ENCODE measurements at regions of chr6 and their contacts with region 1.

Region 1: GRCh38 chr6:129730477-129731165 is 20.6 kb upstream of the ARHGAP18 start:
- DNase-seq: peak; percentile 53 to 66 (median 61)
- H3K4me3 ChIP-seq: no peak overlapping the region
- H3K27ac ChIP-seq: no peak overlapping the region
- H3K4me1 ChIP-seq: no peaks in the 10 kb centered on the region
- H3K27me3 ChIP-seq: no peaks in the 10 kb centered on the region

Region 2: DNA sequence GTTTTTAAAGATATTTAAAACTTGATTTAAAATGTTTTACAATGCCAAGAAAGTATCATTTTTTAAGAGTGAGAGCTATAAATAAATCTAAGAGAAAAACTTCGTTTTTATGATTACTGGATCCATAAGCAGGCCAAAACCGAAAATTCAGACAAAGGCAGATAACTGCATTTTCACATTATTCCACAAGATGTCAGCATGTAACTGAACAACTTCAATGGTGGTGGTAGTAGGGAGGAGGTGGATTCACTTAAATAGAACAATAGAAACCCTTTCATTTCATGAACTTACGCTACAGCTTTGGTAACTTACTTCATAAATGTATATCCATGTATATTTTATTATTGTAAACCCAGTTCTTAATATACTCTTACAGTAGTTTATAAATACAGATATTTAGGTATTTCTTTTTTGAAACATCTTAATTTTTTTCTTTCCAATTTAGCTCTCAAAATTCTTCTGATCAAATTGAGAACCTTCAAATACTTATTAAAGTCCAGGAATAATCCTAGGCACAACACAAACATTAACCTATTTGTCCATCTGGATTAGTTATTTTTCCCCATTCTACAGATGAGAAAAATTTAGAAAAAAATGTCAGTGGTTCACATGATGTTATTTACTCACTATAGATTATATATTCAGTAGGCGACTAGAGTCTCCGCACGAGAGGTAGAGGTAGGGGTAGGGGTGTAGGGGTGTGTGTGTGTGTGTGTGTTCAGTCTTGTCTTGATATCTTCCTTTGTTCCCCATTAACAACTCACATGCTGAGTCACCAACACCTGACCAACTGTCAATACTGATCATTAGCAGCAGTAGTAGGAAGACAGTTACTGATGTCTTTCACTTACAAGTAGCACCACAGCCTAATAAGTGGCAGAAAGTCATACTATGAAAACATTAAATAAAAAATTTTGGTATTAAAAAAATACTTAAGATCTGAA is 132.1 kb before region 1 on chr6:
- CTCF ChIA-PET with region 1: interaction called, 158 read pairs
- POLR2A ChIA-PET with region 1: no interaction called
- DNase-seq: peak; percentile 77 to 86 (median 82)
- H3K4me3 ChIP-seq: no peak overlapping the region
- H3K27ac ChIP-seq: no peak overlapping the region
- H3K4me1 ChIP-seq: no peaks in the 10 kb centered on the region
- H3K27me3 ChIP-seq: no peaks in the 10 kb centered on the region

Region 3: GRCh38 chr6:129672881-129673643 is 57.6 kb before region 1 on chr6:
- CTCF ChIA-PET with region 1: interaction called, 29 read pairs
- POLR2A ChIA-PET with region 1: no interaction called
- DNase-seq: peak in 2 of 3 donors; percentile 72 to 81
- H3K4me3 ChIP-seq: no peak overlapping the region
- H3K27ac ChIP-seq: no peak overlapping the region
- H3K4me1 ChIP-seq: peaks cover 0 to 23% (median 3%) of the 10 kb centered on the region in 4 experiments
- H3K27me3 ChIP-seq: no peaks in the 10 kb centered on the region

Region 4: DNA sequence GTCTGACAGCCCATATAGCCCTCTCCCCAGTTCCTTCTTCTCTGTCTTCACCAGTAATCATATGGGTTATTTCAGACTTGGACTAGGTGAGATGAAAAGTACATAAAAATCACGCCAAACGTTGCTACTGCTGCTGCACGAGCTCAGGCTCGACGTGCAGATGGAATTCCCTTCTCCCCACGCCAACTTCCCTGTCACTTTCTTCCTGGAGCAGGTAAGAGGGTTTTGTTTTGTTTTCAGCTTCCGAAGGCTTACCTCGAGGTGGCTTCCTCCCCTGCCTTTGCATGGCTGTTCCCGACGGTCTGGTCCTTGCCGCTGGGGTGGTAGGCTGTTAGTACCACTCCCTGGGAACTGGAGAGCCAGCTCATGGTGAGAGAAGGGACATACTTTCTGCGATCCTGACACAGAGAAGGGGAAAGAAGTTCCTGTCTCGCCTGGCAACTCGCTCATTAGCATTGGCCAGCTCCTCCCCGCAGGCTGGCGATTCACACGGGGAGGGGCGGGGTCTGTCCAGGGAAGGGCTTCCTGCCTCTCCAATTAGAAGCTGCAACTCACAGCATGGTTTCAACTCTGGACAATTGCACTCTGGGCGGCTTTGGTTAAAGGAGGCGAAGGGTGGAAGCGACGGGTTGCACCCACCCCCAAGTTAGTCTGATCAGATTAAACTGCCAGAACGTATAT is 20.7 kb before region 1 on chr6 and contains the start of gene ARHGAP18:
- CTCF ChIA-PET with region 1: interaction called, 20 read pairs
- POLR2A ChIA-PET with region 1: no interaction called
- DNase-seq: peak; percentile 64 to 82 (median 72)
- H3K4me3 ChIP-seq: peak within 1 kb of the TSS; percentile 58 to 87 (median 81)
- H3K27ac ChIP-seq: peak within 1 kb of the TSS; percentile 35 to 69
- H3K4me1 ChIP-seq: peaks cover 2 to 27% (median 8%) of the 10 kb centered on the region in 4 experiments
- H3K27me3 ChIP-seq: no peaks in the 10 kb centered on the region

Region 5: GRCh38 chr6:129717277-129717676 is 13.3 kb before region 1 on chr6:
- CTCF ChIA-PET with region 1: interaction called, 13 read pairs
- POLR2A ChIA-PET with region 1: no interaction called
- DNase-seq: no peak
- H3K4me3 ChIP-seq: no peak overlapping the region
- H3K27ac ChIP-seq: no peak overlapping the region
- H3K4me1 ChIP-seq: no peaks in the 10 kb centered on the region
- H3K27me3 ChIP-seq: no peaks in the 10 kb centered on the region

Region 6: GRCh38 chr6:129744201-129744879 is 13.7 kb after region 1 on chr6:
- CTCF ChIA-PET with region 1: interaction called, 27 read pairs
- POLR2A ChIA-PET with region 1: no interaction called
- DNase-seq: no peak
- H3K4me3 ChIP-seq: no peak overlapping the region
- H3K27ac ChIP-seq: no peak overlapping the region
- H3K4me1 ChIP-seq: peaks cover 12 to 16% (median 13%) of the 10 kb centered on the region in 4 experiments
- H3K27me3 ChIP-seq: peaks cover 0 to 55% (median 7%) of the 10 kb centered on the region in 5 experiments

Region 7: DNA sequence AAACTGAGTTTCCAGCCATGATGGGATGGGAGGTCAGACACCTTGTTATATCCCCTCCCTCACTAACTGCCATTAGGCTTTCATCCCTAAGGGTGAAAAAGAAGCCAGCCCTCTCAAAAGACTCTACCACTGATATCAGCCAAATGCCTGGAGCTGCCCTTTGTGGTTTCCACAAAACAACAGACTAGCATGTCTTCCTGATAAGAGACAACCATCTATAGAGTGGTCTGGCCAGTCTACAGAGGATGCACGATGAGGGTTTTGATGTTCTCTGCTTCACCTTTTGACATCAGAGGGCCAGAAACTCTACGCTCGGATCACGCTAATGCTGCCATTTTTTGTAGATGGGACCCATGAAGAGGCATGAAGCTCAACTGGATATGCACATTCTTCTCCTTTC is 41.1 kb after region 1 on chr6:
- CTCF ChIA-PET with region 1: no interaction called
- POLR2A ChIA-PET with region 1: no interaction called
- DNase-seq: peak in 1 of 3 donors; percentile 25
- H3K4me3 ChIP-seq: no peak overlapping the region
- H3K27ac ChIP-seq: no peak overlapping the region
- H3K4me1 ChIP-seq: peaks cover 8 to 24% (median 12%) of the 10 kb centered on the region in 4 experiments
- H3K27me3 ChIP-seq: peaks cover 0 to 35% (median 16%) of the 10 kb centered on the region in 5 experiments

Region 8: DNA sequence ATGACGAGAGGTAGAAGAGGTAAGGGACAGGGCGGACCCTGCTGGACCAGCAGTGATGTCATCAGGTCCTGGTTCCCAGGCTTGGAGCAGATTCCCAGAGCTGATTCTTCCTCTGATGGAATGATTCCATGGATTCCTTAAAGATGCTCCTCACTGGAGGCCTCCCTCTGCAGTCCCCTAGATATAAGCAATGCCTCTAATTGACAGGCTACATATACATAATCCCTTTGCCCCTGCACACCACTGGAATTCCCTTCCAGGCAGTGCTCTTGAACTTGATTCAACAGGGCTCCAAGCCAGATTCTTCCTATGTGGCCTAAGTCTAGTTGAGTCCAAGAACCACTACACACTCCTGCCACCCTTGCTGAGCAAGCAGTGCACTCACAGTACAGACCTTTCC is 235.5 kb after region 1 on chr6:
- CTCF ChIA-PET with region 1: no interaction called
- POLR2A ChIA-PET with region 1: no interaction called
- DNase-seq: no peak
- H3K4me3 ChIP-seq: no peak overlapping the region
- H3K27ac ChIP-seq: no peak overlapping the region
- H3K4me1 ChIP-seq: no peaks in the 10 kb centered on the region
- H3K27me3 ChIP-seq: no peaks in the 10 kb centered on the region

Measured in common myeloid progenitor, CD34-positive (primary cell).